PC-9 (cell line): ENCODE measurements at regions of chr13 and their contacts with region 1.

Region 1: DNA sequence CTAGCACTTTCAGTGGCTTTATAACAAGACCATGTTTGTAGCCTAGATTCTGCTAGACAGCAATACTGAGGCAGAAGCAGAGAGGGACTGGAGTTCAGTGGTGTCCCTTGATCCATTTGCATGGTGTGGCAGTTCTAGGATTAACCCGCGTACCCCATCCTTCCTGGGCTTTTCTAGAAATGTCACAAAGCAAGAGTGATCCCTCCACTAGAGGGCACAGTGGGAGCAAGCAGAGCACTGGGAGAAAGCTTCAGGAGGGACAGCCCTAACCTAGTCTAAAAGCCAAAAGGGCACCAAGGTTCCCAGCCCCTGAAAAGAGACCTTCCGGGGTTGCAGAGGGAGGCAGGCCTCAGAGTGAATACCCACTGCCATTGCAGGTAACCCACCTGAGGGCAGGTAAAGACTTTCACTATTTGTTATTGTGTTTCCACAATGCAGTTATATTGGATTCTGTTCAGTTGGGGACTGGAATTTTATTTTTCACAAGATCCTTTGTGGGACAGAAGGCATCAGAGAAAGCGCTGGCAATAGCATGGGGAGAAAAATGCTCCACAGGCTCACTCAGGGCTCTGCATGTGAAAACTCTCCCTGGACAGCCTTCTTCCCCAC is 170.6 kb downstream of the FLT1 start:
- DNase-seq: peak in 1 of 2 experiments; percentile 20
- H3K4me3 ChIP-seq: no peak overlapping the region
- H3K27ac ChIP-seq: no peak overlapping the region
- H3K4me1 ChIP-seq: no peaks in the 10 kb centered on the region
- H3K27me3 ChIP-seq: peaks cover 46% of the 10 kb centered on the region
- CTCF ChIP-seq: peak; percentile 79

Region 2: DNA sequence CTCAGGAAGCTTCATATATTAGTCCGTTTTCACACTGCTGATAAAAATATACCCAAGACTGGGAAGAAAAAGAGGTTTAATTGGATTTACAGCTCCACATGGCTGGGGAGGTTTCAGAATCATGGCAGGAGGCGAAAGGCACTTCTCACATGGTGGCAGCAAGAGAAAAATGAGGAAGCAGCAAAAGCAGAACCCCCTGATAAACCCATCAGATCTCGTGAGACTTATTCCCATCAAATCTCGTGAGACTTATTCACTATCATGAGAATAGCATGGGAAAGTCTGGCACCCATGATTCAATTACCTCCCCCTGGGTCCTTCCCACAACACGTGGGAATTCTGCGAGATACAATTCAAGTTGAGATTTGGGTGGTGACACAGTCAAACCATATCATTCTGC is 247.1 kb before region 1 on chr13:
- CTCF ChIA-PET with region 1: no interaction called
- POLR2A ChIA-PET with region 1: no interaction called
- intact Hi-C with region 1: no loop called
- DNase-seq: no peak
- H3K4me3 ChIP-seq: no peak overlapping the region
- H3K27ac ChIP-seq: no peak overlapping the region
- H3K4me1 ChIP-seq: no peaks in the 10 kb centered on the region
- H3K27me3 ChIP-seq: peaks cover 37% of the 10 kb centered on the region
- CTCF ChIP-seq: no peak

Region 3: GRCh38 chr13:28394422-28394821 is 70.1 kb after region 1 on chr13:
- CTCF ChIA-PET with region 1: no interaction called
- POLR2A ChIA-PET with region 1: no interaction called
- intact Hi-C with region 1: no loop called
- DNase-seq: no peak
- H3K4me3 ChIP-seq: no peak overlapping the region
- H3K27ac ChIP-seq: no peak overlapping the region
- H3K4me1 ChIP-seq: no peaks in the 10 kb centered on the region
- H3K27me3 ChIP-seq: peaks cover 73% of the 10 kb centered on the region
- CTCF ChIP-seq: no peak

Region 4: GRCh38 chr13:28636674-28637317 is 312.5 kb after region 1 on chr13:
- CTCF ChIA-PET with region 1: no interaction called
- POLR2A ChIA-PET with region 1: no interaction called
- intact Hi-C with region 1: loop called (anchors 1 kb)
- DNase-seq: peak; percentile 36 to 74
- H3K4me3 ChIP-seq: no peak overlapping the region
- H3K27ac ChIP-seq: no peak overlapping the region
- H3K4me1 ChIP-seq: 0 out of 2 replicates have a peak, but pooled peaks cover 4% of the 10 kb centered on the region
- H3K27me3 ChIP-seq: peaks cover 28% of the 10 kb centered on the region
- CTCF ChIP-seq: peak; percentile 86